GM12878 (cell line): ENCODE measurements at regions of chrX and their contacts with region 1.

Region 1: GRCh38 chrX:153981771-153982533 is 9.4 kb downstream of the TMEM187 start:
- DNase-seq: no peak
- ATAC-seq: no peak
- H3K4me3 ChIP-seq: no peak overlapping the region
- H3K27ac ChIP-seq: peak overlapping the region; percentile 60
- H3K4me1 ChIP-seq: peaks cover 39% of the 10 kb centered on the region
- H3K27me3 ChIP-seq: no peaks in the 10 kb centered on the region
- CTCF ChIP-seq: no peak
- EP300 ChIP-seq: no peak
- POLR2A ChIP-seq: peak; percentile 29; the same call in 1 of the 2 replicates
- RAD21 ChIP-seq: no peak

Region 2: GRCh38 chrX:153910446-153910845 is 71.5 kb before region 1 on chrX:
- CTCF ChIA-PET with region 1: no interaction called
- POLR2A ChIA-PET with region 1: no interaction called
- RAD21 ChIA-PET with region 1: no interaction called
- SMC1A ChIA-PET with region 1: no interaction called
- in situ Hi-C with region 1: no loop called
- intact Hi-C with region 1: no loop called
- DNase-seq: no peak
- ATAC-seq: no peak
- H3K4me3 ChIP-seq: no peak overlapping the region
- H3K27ac ChIP-seq: no peak overlapping the region
- H3K4me1 ChIP-seq: no peaks in the 10 kb centered on the region
- H3K27me3 ChIP-seq: no peaks in the 10 kb centered on the region
- CTCF ChIP-seq: no peak
- EP300 ChIP-seq: no peak
- POLR2A ChIP-seq: no peak
- RAD21 ChIP-seq: no peak

Region 3: DNA sequence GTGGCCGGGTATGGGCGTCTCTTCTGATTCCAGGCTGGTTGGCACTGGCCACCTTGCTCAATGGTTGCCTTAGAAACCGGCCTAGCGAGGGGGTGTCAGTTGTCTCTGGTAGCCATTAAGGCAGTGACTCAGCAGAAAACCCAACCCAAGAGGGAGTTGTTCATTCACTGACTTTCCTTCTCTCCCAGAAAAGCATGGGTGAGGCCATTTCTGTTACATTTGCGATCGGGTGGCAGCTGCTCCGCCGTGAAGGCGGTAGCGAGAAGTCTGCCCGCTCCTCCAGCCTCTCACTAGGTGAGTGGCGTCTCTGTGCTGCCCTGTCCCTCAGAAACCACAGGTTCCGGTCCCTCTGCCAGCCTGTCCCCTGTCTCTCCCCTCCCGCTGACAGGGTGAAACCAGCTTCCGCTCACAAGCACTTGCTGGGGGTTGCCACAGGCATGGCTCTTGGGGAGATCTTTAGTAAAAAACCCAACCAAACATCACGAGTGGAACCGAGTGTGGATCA is 20.3 kb after region 1 on chrX:
- CTCF ChIA-PET with region 1: interaction called, 5 read pairs
- POLR2A ChIA-PET with region 1: interaction called, 10 read pairs
- RAD21 ChIA-PET with region 1: interaction called, 14 read pairs
- SMC1A ChIA-PET with region 1: interaction called, 27 read pairs
- in situ Hi-C with region 1: no loop called
- intact Hi-C with region 1: loop called (anchors 1 kb)
- DNase-seq: no peak
- ATAC-seq: peak; percentile 84
- H3K4me3 ChIP-seq: no peak overlapping the region
- H3K27ac ChIP-seq: peak overlapping the region; percentile 72
- H3K4me1 ChIP-seq: peaks cover 15% of the 10 kb centered on the region
- H3K27me3 ChIP-seq: no peaks in the 10 kb centered on the region
- CTCF ChIP-seq: no peak
- EP300 ChIP-seq: no peak; a peak in 1 of 4 replicates
- POLR2A ChIP-seq: peak; percentile 38; the same call in 1 of the 2 replicates
- RAD21 ChIP-seq: no peak

Region 4: GRCh38 chrX:154008521-154008920 is 26.6 kb after region 1 on chrX:
- CTCF ChIA-PET with region 1: interaction called, 8 read pairs
- POLR2A ChIA-PET with region 1: interaction called, 10 read pairs
- RAD21 ChIA-PET with region 1: interaction called, 14 read pairs
- SMC1A ChIA-PET with region 1: interaction called, 27 read pairs
- in situ Hi-C with region 1: no loop called
- intact Hi-C with region 1: loop called (anchors 1 kb)
- DNase-seq: no peak
- ATAC-seq: peak; percentile 55
- H3K4me3 ChIP-seq: no peak overlapping the region
- H3K27ac ChIP-seq: peak overlapping the region; percentile 76
- H3K4me1 ChIP-seq: peaks cover 10% of the 10 kb centered on the region
- H3K27me3 ChIP-seq: no peaks in the 10 kb centered on the region
- CTCF ChIP-seq: no peak
- EP300 ChIP-seq: no peak
- POLR2A ChIP-seq: no peak
- RAD21 ChIP-seq: no peak